Endothelial cell of umbilical vein (primary cell): ENCODE measurements at regions of chr3 and their contacts with region 1.

Region 1: DNA sequence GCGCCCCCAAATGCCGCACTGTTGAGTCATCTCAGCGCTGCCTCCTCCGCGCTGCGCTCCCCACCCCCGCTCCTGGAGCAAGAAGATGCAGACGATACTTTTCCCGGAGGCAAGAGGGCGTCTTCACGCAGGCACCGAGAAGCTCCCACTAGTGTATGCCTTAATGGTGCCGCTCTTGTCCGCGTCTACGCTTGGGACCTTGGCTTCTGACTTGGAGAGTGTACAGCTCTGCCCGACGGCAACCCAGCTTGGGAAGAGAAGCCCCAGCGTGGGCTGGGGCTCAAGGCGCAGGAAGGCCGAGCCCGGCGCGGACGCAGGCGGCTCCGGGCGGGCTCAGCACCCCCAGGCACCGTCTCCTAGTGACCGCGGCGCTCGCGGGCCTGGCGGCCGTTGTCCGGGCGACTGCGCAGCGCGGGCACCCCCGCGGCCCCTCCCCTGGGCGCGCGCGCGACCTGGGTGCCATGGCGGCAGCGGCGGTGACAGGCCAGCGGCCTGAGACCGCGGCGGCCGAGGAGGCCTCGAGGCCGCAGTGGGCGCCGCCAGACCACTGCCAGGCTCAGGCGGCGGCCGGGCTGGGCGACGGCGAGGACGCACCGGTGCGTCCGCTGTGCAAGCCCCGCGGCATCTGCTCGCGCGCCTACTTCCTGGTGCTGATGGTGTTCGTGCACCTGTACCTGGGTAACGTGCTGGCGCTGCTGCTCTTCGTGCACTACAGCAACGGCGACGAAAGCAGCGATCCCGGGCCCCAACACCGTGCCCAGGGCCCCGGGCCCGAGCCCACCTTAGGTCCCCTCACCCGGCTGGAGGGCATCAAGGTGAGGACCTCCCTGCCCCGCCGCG is at the start of gene P4HTM:
- DNase-seq: peak; percentile 93
- H3K4me3 ChIP-seq: peak within 1 kb of the TSS; percentile 25 to 69 (median 57)
- H3K27ac ChIP-seq: peak within 1 kb of the TSS; percentile 97
- H3K4me1 ChIP-seq: peaks cover 21% of the 10 kb centered on the region
- H3K27me3 ChIP-seq: no peaks in the 10 kb centered on the region
- CTCF ChIP-seq: peak in 1 of 2 donors; percentile 48
- POLR2A ChIP-seq: peak; percentile 61
- total RNA-seq, gene P4HTM: 23.0 and 26.9 TPM in 2 replicates

Region 2: GRCh38 chr3:48598323-48599076 is 391.5 kb before region 1 on chr3:
- CTCF ChIA-PET with region 1: no interaction called
- POLR2A ChIA-PET with region 1: no interaction called
- dilution Hi-C with region 1: no loop called
- intact Hi-C with region 1: no loop called
- DNase-seq: no peak
- H3K4me3 ChIP-seq: no peak overlapping the region
- H3K27ac ChIP-seq: no peak overlapping the region
- H3K4me1 ChIP-seq: peaks cover 6% of the 10 kb centered on the region
- H3K27me3 ChIP-seq: peaks cover 6 to 9% of the 10 kb centered on the region in 2 experiments
- CTCF ChIP-seq: no peak
- POLR2A ChIP-seq: no peak

Region 3: GRCh38 chr3:48974076-48974864 is 15.7 kb before region 1 on chr3:
- CTCF ChIA-PET with region 1: interaction called, 10 read pairs
- POLR2A ChIA-PET with region 1: no interaction called
- dilution Hi-C with region 1: no loop called
- intact Hi-C with region 1: no loop called
- DNase-seq: no peak
- H3K4me3 ChIP-seq: no peak overlapping the region
- H3K27ac ChIP-seq: no peak overlapping the region
- H3K4me1 ChIP-seq: no peaks in the 10 kb centered on the region
- H3K27me3 ChIP-seq: no peaks in the 10 kb centered on the region
- CTCF ChIP-seq: no peak
- POLR2A ChIP-seq: no peak

Region 4: GRCh38 chr3:49007068-49007770 is 17.2 kb after region 1 on chr3 and contains the start of gene WDR6:
- CTCF ChIA-PET with region 1: interaction called, 254 read pairs
- POLR2A ChIA-PET with region 1: interaction called, 40 read pairs
- dilution Hi-C with region 1: no loop called
- intact Hi-C with region 1: loop called (anchors 1 kb)
- DNase-seq: peak; percentile 98
- H3K4me3 ChIP-seq: peak within 1 kb of the TSS; percentile 39 to 93 (median 46)
- H3K27ac ChIP-seq: peak within 1 kb of the TSS; percentile 57
- H3K4me1 ChIP-seq: peaks cover 15% of the 10 kb centered on the region
- H3K27me3 ChIP-seq: no peaks in the 10 kb centered on the region
- CTCF ChIP-seq: peak; percentile 22 to 30
- POLR2A ChIP-seq: peak; percentile 89
- total RNA-seq, gene WDR6: 161 and 192 TPM in 2 replicates

Region 5: DNA sequence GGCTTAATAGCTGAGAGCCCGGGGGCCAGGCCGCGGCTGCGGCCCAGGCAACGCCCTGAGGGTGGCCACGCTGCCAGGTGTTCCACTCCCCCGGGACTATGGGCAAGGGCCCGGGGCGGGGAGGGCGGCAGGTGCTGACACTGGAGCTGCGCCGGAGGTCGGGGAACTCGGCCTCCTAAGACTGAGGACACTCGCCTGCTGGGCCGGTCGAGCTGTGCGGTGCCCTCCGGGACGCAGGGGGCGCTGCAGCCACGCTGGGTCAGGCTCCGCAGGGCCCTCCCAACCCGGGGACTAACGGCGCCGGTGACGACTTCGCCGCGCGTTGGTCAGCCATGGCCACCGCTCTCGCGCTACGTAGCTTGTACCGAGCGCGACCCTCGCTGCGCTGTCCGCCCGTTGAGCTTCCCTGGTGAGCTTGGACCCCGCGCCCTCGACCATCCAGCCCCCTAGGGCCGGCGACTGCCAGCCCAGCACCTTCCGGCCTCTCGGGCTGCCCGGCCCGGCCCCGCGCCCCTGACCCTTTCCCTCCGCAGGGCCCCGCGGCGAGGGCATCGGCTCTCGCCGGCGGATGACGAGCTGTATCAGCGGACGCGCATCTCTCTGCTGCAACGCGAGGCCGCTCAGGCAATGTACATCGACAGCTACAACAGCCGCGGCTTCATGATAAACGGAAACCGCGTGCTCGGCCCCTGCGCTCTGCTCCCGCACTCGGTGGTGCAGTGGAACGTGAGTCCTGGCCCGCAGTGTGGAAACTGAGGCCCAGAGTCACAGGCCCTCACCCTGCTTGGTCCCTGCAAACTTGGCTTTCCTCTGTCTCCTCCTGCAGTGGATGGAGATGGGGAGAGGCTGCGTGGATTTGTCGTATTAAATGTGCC is 32.0 kb after region 1 on chr3 and contains the start of gene NDUFAF3:
- CTCF ChIA-PET with region 1: interaction called, 127 read pairs
- POLR2A ChIA-PET with region 1: interaction called, 6 read pairs
- dilution Hi-C with region 1: no loop called
- intact Hi-C with region 1: loop called (anchors 1 kb)
- DNase-seq: peak; percentile 93
- H3K4me3 ChIP-seq: peak within 1 kb of the TSS; percentile 56 to 59 (median 57)
- H3K27ac ChIP-seq: peak within 1 kb of the TSS; percentile 95
- H3K4me1 ChIP-seq: peaks cover 31% of the 10 kb centered on the region
- H3K27me3 ChIP-seq: no peaks in the 10 kb centered on the region
- CTCF ChIP-seq: peak; percentile 99
- POLR2A ChIP-seq: peak; percentile 96
- total RNA-seq, gene NDUFAF3: 74.5 and 91.1 TPM in 2 replicates

Region 6: DNA sequence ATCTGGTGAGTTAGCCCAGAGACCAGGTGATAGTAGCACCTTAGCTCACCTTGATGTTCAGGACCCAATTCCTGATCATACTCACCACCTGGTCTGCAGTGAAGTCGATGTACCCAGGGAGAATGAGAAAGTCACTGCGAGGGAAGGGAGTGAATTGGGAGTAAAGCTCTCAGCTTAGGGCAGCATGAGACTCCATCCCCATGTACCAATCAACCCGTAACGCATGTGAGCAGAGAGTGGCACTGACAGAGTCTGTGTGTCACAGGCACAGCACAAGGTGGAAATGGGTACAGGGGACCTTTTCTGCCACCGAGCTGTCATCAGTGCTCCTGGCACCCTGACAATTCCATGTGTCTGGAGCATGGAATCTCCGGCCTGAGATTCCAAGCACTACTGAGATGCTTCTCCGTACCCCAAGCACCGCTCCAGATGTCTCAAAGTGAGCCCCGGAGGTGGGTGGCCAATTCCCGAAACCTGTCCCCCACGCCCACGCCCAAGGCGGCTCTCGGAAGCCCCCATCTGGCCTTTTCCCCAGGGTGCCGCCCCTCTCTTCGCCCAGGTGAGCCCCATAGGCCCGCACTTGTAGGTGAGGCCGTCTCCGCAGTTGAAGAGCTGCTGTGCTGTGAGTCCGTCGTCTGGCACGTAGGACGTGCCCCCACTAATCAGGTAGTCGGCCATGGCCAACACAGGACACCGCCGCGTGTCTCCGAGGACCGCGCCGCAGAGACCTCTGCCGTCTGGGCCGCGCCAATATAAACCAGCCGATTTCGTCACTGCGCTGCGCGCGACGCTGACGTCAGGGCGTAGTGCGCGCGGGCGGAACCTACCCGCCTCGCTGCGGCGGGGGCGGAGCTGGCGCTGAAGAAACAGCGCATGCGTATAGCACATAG is 38.9 kb after region 1 on chr3 and contains the start of gene IMPDH2:
- CTCF ChIA-PET with region 1: interaction called, 19 read pairs
- POLR2A ChIA-PET with region 1: interaction called, 3 read pairs
- dilution Hi-C with region 1: no loop called
- intact Hi-C with region 1: no loop called
- DNase-seq: peak; percentile 97
- H3K4me3 ChIP-seq: peak within 1 kb of the TSS; percentile 7 to 66 (median 44)
- H3K27ac ChIP-seq: peak within 1 kb of the TSS; percentile 30
- H3K4me1 ChIP-seq: peaks cover 11% of the 10 kb centered on the region
- H3K27me3 ChIP-seq: no peaks in the 10 kb centered on the region
- CTCF ChIP-seq: peak in 1 of 2 donors; percentile 3
- POLR2A ChIP-seq: peak; percentile 99
- total RNA-seq, gene IMPDH2: 189 and 195 TPM in 2 replicates

Region 7: DNA sequence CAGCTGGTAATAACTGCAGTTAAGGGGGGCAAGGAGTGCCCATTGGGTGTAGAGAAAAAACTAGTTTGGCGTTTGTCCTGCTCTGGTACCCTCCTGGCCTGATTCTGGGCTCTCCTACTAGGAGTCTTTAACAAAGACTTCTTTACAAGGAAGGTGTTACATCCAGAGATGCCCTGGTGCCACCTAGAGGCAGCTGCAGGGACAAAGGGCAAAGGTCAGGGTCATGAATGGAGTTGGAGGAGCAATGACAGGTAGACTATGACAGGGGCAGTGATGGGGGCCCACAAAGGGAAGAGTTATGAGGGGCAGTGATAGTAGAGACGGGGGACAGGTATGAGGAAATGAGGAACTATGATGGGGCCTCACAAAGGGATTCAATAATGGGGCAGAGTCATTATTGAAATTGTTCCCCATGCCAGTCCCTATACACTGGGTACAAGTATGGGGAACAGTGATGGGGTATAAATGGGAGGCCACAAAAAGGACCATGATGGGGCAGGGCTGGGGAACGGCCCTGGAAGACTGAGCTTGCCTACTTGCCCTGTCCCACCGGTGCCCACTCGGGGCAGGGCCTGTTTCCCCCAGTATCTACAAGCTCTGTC is 168.2 kb after region 1 on chr3:
- CTCF ChIA-PET with region 1: no interaction called
- POLR2A ChIA-PET with region 1: no interaction called
- dilution Hi-C with region 1: no loop called
- intact Hi-C with region 1: loop called (anchors 2 kb)
- DNase-seq: no peak
- H3K4me3 ChIP-seq: no peak overlapping the region
- H3K27ac ChIP-seq: no peak overlapping the region
- H3K4me1 ChIP-seq: no peaks in the 10 kb centered on the region
- H3K27me3 ChIP-seq: no peaks in the 10 kb centered on the region
- CTCF ChIP-seq: peak; percentile 12 to 19
- POLR2A ChIP-seq: no peak

Region 8: GRCh38 chr3:49173116-49173791 is 183.2 kb after region 1 on chr3:
- CTCF ChIA-PET with region 1: no interaction called
- POLR2A ChIA-PET with region 1: no interaction called
- dilution Hi-C with region 1: no loop called
- intact Hi-C with region 1: no loop called
- DNase-seq: peak; percentile 88
- H3K4me3 ChIP-seq: peak overlapping the region in 1 of 3 experiments; percentile 94
- H3K27ac ChIP-seq: no peak overlapping the region
- H3K4me1 ChIP-seq: peaks cover 18% of the 10 kb centered on the region
- H3K27me3 ChIP-seq: no peaks in the 10 kb centered on the region
- CTCF ChIP-seq: no peak
- POLR2A ChIP-seq: no peak